ENCODE measurements at regions of chr5 and their contacts with region 1.

Region 1: GRCh38 chr5:16456103-16456832 is 9.3 kb downstream of the ZNF622 start:
- DNase-seq: no peak
- H3K4me3 ChIP-seq: no peak overlapping the region
- CTCF ChIP-seq: peak; percentile 52

Region 2: GRCh38 chr5:16160706-16161105 is 295.6 kb before region 1 on chr5:
- CTCF ChIA-PET with region 1: interaction called, 119 read pairs
- POLR2A ChIA-PET with region 1: interaction called, 4 read pairs
- DNase-seq: peak; percentile 17
- H3K4me3 ChIP-seq: no peak overlapping the region
- CTCF ChIP-seq: peak; percentile 66

Region 3: DNA sequence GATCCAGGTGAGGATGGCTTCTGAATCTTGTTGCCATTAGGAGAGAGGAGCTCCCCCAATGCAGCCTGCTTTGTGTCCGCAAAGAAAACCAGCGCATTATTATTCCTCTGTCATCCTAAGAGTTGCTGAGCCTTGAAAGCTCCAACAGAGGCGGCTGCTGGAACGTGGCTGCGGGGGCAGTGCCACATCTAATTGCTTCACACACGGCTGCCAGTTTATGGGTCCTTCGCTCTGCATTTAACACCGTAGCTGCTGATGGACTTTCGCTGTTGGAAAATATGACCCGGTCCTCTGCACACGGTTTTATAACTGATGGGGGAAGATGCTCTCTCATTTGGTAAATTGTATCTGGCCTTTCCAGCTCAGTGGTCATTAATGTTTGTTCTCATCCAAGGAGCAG is 28.7 kb before region 1 on chr5:
- CTCF ChIA-PET with region 1: interaction called, 10 read pairs
- POLR2A ChIA-PET with region 1: no interaction called
- DNase-seq: no peak
- H3K4me3 ChIP-seq: no peak overlapping the region
- CTCF ChIP-seq: no peak

Region 4: DNA sequence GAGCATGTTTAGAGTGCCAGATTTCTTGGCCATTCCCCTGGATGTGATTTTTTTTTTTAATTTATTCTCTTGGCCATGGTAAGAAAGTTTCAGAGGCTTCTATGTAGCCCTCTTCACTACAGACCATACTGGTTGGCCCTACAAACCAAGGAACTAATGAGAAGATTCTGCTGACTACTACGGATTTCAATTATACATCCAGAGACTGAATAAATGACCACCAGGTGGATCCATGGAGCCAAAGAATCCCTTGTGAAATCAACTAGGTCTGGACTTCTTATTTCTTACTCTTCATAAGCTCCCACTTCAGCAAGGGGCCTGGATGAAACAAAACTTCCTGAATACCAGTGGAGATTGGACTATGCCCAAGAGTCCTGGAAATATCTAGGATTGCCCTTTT is 18.3 kb before region 1 on chr5:
- CTCF ChIA-PET with region 1: interaction called, 100 read pairs
- POLR2A ChIA-PET with region 1: no interaction called
- DNase-seq: no peak
- H3K4me3 ChIP-seq: no peak overlapping the region
- CTCF ChIP-seq: no peak

Region 5: DNA sequence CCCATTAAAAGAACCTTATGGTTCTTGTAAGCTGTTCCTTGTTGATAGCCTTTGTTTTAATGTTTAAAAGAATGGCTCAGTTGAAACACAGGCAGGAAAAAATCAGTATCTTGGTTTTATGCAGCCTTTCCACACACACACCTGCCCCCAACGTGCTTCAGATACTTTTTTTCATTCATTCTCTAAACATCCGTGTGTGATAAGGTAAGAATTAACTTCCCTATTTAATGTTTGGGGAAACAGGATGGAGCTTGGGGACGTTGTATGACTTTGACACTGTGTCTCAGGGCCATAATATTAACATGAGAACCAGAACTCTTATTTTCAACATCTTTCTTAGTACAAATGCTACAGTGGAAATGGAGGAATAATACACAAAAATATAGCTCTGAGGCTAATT is 15.1 kb after region 1 on chr5:
- CTCF ChIA-PET with region 1: interaction called, 14 read pairs
- POLR2A ChIA-PET with region 1: no interaction called
- DNase-seq: no peak
- H3K4me3 ChIP-seq: no peak overlapping the region
- CTCF ChIP-seq: no peak